SK-N-SH (cell line): ENCODE measurements at regions of chr1 and their contacts with region 1.

Region 1: GRCh38 chr1:115138968-115139367 is 49.7 kb upstream of the TSPAN2 start:
- DNase-seq: peak; percentile 87
- H3K4me3 ChIP-seq: no peak overlapping the region; a peak in 1 of 4 replicates
- H3K27ac ChIP-seq: peak overlapping the region; percentile 16 to 60; a peak in 3 of 4 replicates
- H3K4me1 ChIP-seq: peaks cover 5 to 20% of the 10 kb centered on the region in 2 experiments; a peak in 2 of 4 replicates
- H3K27me3 ChIP-seq: no peaks in the 10 kb centered on the region
- CTCF ChIP-seq: peak; percentile 93
- EP300 ChIP-seq: no peak
- RAD21 ChIP-seq: peak; percentile 99

Region 2: GRCh38 chr1:115123116-115123515 is 15.9 kb before region 1 on chr1:
- CTCF ChIA-PET with region 1: interaction called, 36 read pairs
- POLR2A ChIA-PET with region 1: no interaction called
- DNase-seq: no peak
- H3K4me3 ChIP-seq: no peak overlapping the region
- H3K27ac ChIP-seq: no peak overlapping the region
- H3K4me1 ChIP-seq: no peaks in the 10 kb centered on the region
- H3K27me3 ChIP-seq: no peaks in the 10 kb centered on the region
- CTCF ChIP-seq: no peak
- EP300 ChIP-seq: no peak
- RAD21 ChIP-seq: no peak

Region 3: DNA sequence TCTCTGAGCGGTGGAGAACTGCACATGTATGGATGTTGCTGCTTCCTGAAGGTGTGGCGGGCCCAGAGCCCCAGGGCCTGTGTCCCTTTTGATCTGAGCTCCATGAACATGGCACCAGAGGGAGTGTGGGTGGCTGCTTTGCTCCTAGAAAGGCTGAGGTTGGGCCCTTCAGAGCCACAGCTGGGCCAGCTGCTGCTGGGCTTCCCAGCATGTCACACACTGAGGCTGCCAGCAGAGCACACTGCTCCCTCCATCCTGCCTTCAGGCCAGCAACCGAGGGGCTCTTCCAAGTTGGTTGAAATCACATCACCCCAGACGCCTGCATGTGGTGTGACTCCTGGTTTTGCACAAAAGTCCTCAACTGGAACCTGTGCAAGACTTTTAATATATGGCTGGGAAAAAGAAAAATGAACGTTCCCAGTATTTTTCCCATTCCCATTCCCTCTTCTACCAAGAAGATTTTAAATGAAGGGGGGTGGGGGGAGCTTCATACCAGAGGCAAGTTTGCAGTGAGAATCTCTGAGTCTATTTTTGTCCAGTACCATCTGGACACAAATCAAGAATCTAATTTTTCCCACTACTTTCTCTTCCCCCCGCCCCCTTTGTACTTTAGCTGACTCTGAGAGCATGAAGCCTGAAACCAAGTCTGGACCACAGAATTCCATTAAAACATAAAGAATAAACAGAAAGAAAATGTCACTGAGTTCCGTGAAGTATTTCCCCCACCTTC is 225.2 kb after region 1 on chr1:
- CTCF ChIA-PET with region 1: interaction called, 26 read pairs
- POLR2A ChIA-PET with region 1: no interaction called
- DNase-seq: peak; percentile 57
- H3K4me3 ChIP-seq: no peak overlapping the region
- H3K27ac ChIP-seq: peak overlapping the region; percentile 61 to 94
- H3K4me1 ChIP-seq: peaks cover 10 to 27% of the 10 kb centered on the region in 2 experiments; a peak in 3 of 4 replicates
- H3K27me3 ChIP-seq: no peaks in the 10 kb centered on the region
- CTCF ChIP-seq: no peak
- EP300 ChIP-seq: no peak
- RAD21 ChIP-seq: no peak

Region 4: DNA sequence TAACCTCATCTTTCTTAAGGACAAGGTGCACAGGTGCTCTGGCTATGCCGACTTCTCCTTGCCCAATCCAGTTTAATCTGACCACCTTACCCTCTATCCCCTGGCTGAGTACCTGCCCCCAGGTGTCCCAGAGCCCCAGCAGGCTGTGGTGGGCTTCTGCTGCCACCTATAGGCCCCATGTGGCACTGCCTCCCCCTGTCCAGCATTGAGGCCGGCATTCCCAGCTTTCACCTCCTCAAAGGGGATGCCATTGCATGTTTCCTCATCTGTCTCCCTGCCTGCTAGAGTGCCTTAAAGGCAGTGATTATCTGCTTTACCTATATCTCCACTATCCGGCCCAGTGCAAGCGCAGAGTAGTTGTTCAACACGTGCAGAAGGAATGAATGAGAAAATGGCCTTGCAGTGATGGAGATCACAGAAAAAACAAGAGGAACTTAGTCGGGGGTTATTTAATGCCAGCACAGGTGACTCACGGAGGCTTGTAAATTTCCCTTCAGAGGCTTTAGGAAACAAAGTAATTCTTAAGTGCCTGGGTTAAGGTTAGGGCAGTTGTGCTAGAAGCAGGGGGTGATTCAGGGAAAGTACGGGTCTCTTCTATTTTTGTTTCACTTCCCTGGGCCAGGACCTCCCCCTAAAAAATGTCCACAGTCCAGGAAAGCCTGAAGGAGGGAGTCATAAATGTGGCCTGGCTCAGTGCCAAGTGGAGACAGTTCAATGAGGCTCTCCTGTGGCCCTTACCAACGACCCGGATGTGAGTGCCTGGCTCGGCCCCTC is 330.9 kb after region 1 on chr1:
- CTCF ChIA-PET with region 1: interaction called, 280 read pairs
- POLR2A ChIA-PET with region 1: no interaction called
- DNase-seq: peak; percentile 77
- H3K4me3 ChIP-seq: peak overlapping the region in 1 of 2 experiments; percentile 50; a peak in 1 of 4 replicates
- H3K27ac ChIP-seq: peak overlapping the region in 1 of 2 experiments; percentile 64; a peak in 3 of 4 replicates
- H3K4me1 ChIP-seq: peaks cover 8 to 9% of the 10 kb centered on the region in 2 experiments; a peak in 1 of 4 replicates
- H3K27me3 ChIP-seq: no peaks in the 10 kb centered on the region
- CTCF ChIP-seq: peak; percentile 97
- EP300 ChIP-seq: no peak
- RAD21 ChIP-seq: peak; percentile 95

Region 5: DNA sequence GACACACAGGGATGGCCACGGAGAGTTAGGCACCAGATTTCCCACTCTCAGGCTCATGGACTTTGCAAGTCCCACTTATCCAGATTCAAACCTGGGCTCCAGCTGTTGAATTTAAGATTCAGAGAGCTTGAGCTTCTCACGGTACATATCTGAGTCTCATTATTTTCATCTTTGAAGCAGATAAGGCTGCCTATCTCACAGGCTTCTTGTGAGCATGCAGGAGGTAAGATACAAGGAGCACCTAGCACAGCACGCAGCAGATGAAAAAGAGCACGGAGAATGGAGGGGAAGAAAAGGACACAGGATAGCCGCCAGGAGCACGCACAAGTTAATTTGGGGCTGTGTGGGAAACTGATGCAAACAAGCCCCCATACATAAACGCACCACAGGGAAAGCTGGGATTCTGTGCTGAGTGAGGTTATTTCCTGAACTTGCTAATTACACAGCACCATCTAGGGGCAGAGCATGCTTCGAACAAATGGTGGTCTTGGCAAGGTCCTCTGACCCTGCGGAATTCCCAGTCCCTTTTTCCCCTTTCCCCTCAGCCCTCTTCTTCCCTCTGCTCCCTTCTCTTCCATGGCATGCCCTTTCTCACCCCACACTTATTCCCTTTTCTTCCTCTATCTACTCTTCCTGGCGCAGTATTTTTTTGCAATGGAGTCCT is 368.1 kb after region 1 on chr1:
- CTCF ChIA-PET with region 1: interaction called, 47 read pairs
- POLR2A ChIA-PET with region 1: no interaction called
- DNase-seq: peak; percentile 52
- H3K4me3 ChIP-seq: no peak overlapping the region; a peak in 1 of 4 replicates
- H3K27ac ChIP-seq: no peak overlapping the region
- H3K4me1 ChIP-seq: peaks cover 0 to 3% of the 10 kb centered on the region in 2 experiments; a peak in 2 of 4 replicates
- H3K27me3 ChIP-seq: no peaks in the 10 kb centered on the region
- CTCF ChIP-seq: peak; percentile 62
- EP300 ChIP-seq: no peak
- RAD21 ChIP-seq: peak; percentile 82

Region 6: GRCh38 chr1:115609021-115609420 is 470.1 kb after region 1 on chr1:
- CTCF ChIA-PET with region 1: interaction called, 12 read pairs
- POLR2A ChIA-PET with region 1: no interaction called
- DNase-seq: no peak
- H3K4me3 ChIP-seq: no peak overlapping the region
- H3K27ac ChIP-seq: no peak overlapping the region
- H3K4me1 ChIP-seq: no peaks in the 10 kb centered on the region
- H3K27me3 ChIP-seq: peaks cover 16% of the 10 kb centered on the region; the same call in 1 of the 2 replicates
- CTCF ChIP-seq: no peak
- EP300 ChIP-seq: no peak
- RAD21 ChIP-seq: no peak